MCF 10A (cell line): ENCODE measurements at regions of chr10 and their contacts with region 1.

Region 1: DNA sequence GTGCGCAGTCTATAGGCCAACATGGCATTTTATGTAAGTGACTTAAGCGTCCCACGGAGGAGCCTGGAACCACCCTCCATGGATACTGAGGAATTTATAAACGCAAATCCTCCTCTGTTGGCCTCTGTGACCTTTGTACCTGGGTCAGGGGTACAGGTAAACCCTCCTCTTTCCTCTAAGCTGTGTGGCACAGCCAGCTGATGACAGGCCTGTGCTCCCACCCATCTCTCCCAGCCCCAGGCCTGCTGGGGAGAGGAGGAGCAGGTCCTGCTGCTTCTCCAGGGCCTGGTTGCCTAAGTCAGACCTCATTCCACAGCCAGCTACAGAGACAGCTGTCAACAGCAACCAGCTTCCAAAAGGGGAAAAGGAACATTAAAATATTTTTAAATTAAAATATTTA is 5.0 kb downstream of the AVPI1 start:
- DNase-seq: no peak
- H3K4me3 Mint-ChIP-seq: peak overlapping the region; percentile 91
- H3K27ac Mint-ChIP-seq: no peak overlapping the region
- H3K4me1 Mint-ChIP-seq: peaks cover 18% of the 10 kb centered on the region
- H3K27me3 Mint-ChIP-seq: no peaks in the 10 kb centered on the region
- CTCF ChIP-seq: no peak

Region 2: GRCh38 chr10:97731346-97732051 is 49.5 kb after region 1 on chr10:
- CTCF ChIA-PET with region 1: interaction called, 45 read pairs
- POLR2A ChIA-PET with region 1: interaction called, 270 read pairs
- intact Hi-C with region 1: no loop called
- DNase-seq: peak; percentile 92
- H3K4me3 Mint-ChIP-seq: no peak overlapping the region
- H3K27ac Mint-ChIP-seq: no peak overlapping the region
- H3K4me1 Mint-ChIP-seq: peaks cover 15% of the 10 kb centered on the region
- H3K27me3 Mint-ChIP-seq: no peaks in the 10 kb centered on the region
- CTCF ChIP-seq: peak; percentile 86